ENCODE measurements at regions of chr12 and their contacts with region 1.

Region 1: GRCh38 chr12:14948672-14949071 is 10.3 kb upstream of the ERP27 start:
- DNase-seq: peak; percentile 49
- H3K4me3 Mint-ChIP-seq: peak overlapping the region; percentile 79
- H3K27ac Mint-ChIP-seq: peak overlapping the region; percentile 99
- H3K4me1 Mint-ChIP-seq: peaks cover 90% of the 10 kb centered on the region
- H3K27me3 Mint-ChIP-seq: no peaks in the 10 kb centered on the region

Region 2: GRCh38 chr12:14216405-14217294 is 732.0 kb before region 1 on chr12:
- intact Hi-C with region 1: loop called (anchors 5 kb)
- DNase-seq: no peak
- H3K4me3 Mint-ChIP-seq: peak overlapping the region; percentile 0
- H3K27ac Mint-ChIP-seq: no peak overlapping the region
- H3K4me1 Mint-ChIP-seq: peaks cover 15% of the 10 kb centered on the region
- H3K27me3 Mint-ChIP-seq: no peaks in the 10 kb centered on the region

Region 3: DNA sequence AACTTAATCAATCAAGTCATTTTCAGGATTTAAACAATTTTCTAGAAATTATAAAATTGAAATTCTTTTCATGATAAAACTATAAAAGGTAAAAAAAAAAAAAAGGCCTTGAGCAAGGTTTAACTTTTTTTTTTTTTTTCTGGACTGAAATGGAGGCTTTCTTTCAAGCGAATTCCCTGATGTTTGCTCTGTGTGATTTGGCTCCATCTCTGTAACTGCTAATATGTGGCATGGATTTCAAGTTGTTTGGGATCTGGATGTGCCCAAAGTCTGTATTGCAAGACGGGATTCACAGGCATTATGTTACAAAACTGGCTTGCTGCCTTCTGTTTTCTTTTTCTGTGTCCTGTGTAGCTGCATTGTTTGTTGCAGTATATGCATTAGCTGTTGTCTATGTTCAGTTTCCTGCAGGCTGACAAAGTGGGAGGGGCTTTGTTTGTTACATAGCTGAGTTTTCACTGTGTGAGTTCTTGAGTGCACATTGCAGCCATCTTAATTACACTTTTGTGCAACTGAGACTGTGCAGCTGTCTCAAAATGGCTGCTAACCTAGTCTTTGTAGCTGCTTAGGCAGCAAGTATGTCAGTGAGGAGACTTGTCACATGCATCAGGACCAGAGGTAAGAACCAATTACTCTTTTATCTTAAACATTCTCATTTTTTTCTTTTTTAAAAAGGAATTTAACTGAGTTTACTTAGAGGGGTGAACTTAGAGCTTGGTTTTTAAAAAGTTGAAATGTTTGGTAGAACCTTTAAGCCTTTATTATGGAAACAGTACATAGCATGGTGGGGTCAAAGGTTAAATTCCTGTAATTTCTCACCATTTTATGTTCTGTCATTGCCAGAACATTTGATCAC is 563.7 kb before region 1 on chr12:
- intact Hi-C with region 1: loop called (anchors 5 kb)
- DNase-seq: peak; percentile 73
- H3K4me3 Mint-ChIP-seq: peak overlapping the region; percentile 86
- H3K27ac Mint-ChIP-seq: peak overlapping the region; percentile 97
- H3K4me1 Mint-ChIP-seq: peaks cover 58% of the 10 kb centered on the region
- H3K27me3 Mint-ChIP-seq: no peaks in the 10 kb centered on the region

Region 4: DNA sequence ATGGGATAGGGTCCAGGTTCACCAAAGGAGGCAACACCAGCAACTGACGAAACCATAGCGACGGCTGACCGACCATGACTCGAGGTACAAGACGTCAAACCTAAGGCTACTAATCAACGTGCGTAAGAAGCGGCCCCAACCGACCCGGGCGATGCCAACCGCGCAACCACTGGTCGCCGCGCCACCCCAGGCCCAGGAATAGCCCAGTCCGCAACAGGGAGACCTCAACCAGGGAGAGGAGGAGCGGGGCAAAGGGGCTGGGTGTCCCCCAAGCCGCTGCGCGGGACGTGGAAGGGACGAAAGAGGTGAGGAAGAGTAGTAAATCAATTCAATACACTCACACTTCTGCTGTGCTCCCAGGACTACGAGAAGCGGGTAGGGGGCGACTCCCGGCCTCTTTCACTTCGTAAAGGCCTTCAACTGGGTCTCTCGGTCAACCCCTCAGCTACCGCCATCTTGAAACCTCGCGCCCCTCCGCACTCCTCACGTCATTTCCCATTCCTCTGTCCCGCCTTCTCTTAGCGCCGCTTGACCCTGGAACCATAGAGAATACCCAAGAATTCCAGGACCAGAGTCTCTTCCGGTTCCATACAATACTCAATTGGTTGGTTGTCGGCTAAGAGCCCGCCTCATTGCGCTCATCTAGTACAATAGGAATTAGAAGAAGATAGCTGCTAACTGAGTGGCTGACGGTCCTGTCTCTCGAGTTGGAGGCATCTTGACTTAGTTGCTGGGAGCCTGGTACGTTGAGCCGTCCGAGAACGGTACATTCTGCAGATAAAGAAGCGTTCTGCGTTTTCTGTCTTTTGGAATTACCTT is 145.5 kb before region 1 on chr12 and contains the starts of genes C12orf60 and WBP11:
- intact Hi-C with region 1: loop called (anchors 1 kb)
- DNase-seq: peak; percentile 84
- H3K4me3 Mint-ChIP-seq: no peak within 1 kb of the TSS
- H3K27ac Mint-ChIP-seq: no peak within 1 kb of the TSS
- H3K4me1 Mint-ChIP-seq: peaks cover 22% of the 10 kb centered on the region
- H3K27me3 Mint-ChIP-seq: no peaks in the 10 kb centered on the region
- total RNA-seq, gene C12orf60: 2.1 and 2.2 TPM in 2 replicates
- total RNA-seq, gene WBP11: 128 and 142 TPM in 2 replicates

Region 5: GRCh38 chr12:14845350-14845750 is 103.3 kb before region 1 on chr12:
- intact Hi-C with region 1: no loop called
- DNase-seq: peak; percentile 6
- H3K4me3 Mint-ChIP-seq: no peak overlapping the region
- H3K27ac Mint-ChIP-seq: no peak overlapping the region
- H3K4me1 Mint-ChIP-seq: peaks cover 5% of the 10 kb centered on the region
- H3K27me3 Mint-ChIP-seq: peaks cover 5% of the 10 kb centered on the region

Region 6: GRCh38 chr12:14910090-14910915 is 38.4 kb before region 1 on chr12:
- intact Hi-C with region 1: loop called (anchors 1 kb)
- DNase-seq: no peak
- H3K4me3 Mint-ChIP-seq: peak overlapping the region; percentile 56
- H3K27ac Mint-ChIP-seq: peak overlapping the region; percentile 97
- H3K4me1 Mint-ChIP-seq: peaks cover 31% of the 10 kb centered on the region
- H3K27me3 Mint-ChIP-seq: no peaks in the 10 kb centered on the region

Region 7: GRCh38 chr12:14931816-14932565 is 16.7 kb before region 1 on chr12:
- intact Hi-C with region 1: loop called (anchors 2 kb)
- DNase-seq: no peak
- H3K4me3 Mint-ChIP-seq: no peak overlapping the region
- H3K27ac Mint-ChIP-seq: no peak overlapping the region
- H3K4me1 Mint-ChIP-seq: no peaks in the 10 kb centered on the region
- H3K27me3 Mint-ChIP-seq: no peaks in the 10 kb centered on the region

Region 8: GRCh38 chr12:15256766-15257165 is 308.1 kb after region 1 on chr12:
- intact Hi-C with region 1: no loop called
- DNase-seq: no peak
- H3K4me3 Mint-ChIP-seq: no peak overlapping the region
- H3K27ac Mint-ChIP-seq: no peak overlapping the region
- H3K4me1 Mint-ChIP-seq: no peaks in the 10 kb centered on the region
- H3K27me3 Mint-ChIP-seq: peaks cover 10% of the 10 kb centered on the region

Region 9: GRCh38 chr12:15563663-15564062 is 615.0 kb after region 1 on chr12:
- intact Hi-C with region 1: loop called (anchors 5 kb)
- DNase-seq: peak; percentile 20
- H3K4me3 Mint-ChIP-seq: peak overlapping the region; percentile 87
- H3K27ac Mint-ChIP-seq: peak overlapping the region; percentile 89
- H3K4me1 Mint-ChIP-seq: peaks cover 77% of the 10 kb centered on the region
- H3K27me3 Mint-ChIP-seq: peaks cover 2% of the 10 kb centered on the region